Aorta (tissue), 5 donors: ENCODE measurements at regions of chr22 and their contacts with region 1.

Region 1: GRCh38 chr22:28600546-28601143 is 79.0 kb downstream of the TTC28 start:
- DNase-seq: no peak
- ATAC-seq: peak; percentile 52
- H3K4me3 ChIP-seq: no peak overlapping the region
- H3K27ac ChIP-seq: no peak overlapping the region
- H3K4me1 ChIP-seq: no peaks in the 10 kb centered on the region
- H3K27me3 ChIP-seq: no peaks in the 10 kb centered on the region

Region 2: DNA sequence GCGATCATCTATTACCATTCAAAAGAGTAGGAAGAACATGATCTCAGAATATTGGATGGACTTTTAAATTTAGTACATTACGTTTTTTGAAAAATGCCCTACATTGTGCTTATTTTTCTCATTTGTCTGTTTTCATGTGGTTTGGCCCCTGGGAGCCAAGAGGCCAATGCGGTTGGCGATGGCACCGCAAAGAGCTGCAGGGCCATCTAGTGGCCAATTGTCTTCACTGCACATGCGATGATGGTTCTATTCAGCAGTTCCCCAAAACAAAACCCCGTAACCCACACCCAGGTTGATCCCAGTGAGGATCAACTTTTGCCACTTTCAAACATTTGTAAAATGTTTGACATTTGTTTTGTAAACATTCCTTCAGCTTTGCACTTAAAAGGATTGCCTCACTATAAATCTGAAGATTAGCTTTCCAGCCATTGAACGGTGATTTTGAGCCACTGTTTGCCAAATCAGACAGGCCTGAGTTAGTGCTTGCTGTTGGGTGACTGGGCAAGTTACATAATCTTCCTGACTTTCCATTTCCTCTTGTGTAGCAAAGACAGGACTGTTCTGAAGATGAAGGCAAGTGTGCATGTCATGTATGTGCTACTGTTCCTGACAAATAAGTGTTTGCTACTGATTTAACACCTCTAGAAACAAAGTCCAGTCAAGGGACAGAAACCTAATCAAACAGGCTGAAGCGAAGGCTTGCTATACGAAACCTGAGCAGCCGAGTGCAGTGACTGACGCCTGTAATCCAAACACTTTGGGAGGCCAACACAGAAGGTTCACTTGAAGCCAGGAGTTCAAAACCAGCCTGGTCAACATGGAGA is 228.9 kb after region 1 on chr22:
- intact Hi-C with region 1: loop called (anchors 1 to 2 kb)
- DNase-seq: peak; percentile 86 to 88
- ATAC-seq: peak; percentile 93
- H3K4me3 ChIP-seq: no peak overlapping the region
- H3K27ac ChIP-seq: no peak overlapping the region
- H3K4me1 ChIP-seq: no peaks in the 10 kb centered on the region
- H3K27me3 ChIP-seq: no peaks in the 10 kb centered on the region

Region 3: DNA sequence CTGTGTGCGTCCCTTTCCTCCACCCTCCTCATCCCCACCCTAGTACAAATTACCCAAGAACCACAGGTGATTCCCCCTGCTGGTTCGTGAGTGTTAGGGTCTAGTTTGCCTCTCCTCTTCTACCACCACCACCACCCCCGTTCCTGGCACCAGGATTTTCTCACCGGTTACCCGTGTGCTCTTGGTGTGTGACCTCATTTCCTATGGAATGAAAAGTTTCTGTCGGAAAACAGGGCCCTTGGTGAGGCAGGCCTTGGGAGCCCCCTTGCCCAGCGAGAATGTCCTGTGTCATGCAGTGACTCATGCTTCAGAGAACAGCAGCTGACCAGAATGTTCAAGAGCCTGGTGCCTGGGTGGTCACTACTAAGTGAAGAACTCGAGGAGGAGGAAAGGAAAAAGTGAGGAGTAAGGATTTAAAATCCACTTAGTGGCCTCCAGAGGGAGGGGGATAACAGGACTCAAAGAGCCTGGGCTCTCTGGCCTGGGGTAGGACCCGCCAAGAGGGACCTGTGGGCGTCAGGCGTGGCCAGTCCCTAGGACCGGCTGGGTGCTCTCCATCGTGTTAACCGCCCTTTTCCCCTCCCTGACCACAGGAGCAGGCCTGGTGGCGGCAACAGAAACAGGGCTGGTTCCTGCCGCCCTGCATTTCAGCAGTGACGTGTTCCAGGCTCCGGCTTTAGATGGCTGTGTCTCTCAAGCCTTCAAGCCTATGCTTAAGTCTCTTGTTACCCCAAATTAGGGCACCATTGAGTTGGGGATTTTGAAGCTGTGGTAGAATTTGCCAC is 430.8 kb after region 1 on chr22:
- intact Hi-C with region 1: loop called in 1 of 2 experiments (anchors 10 kb)
- DNase-seq: peak; percentile 83 to 86
- ATAC-seq: peak; percentile 92
- H3K4me3 ChIP-seq: no peak overlapping the region
- H3K27ac ChIP-seq: peak overlapping the region; percentile 89 to 93
- H3K4me1 ChIP-seq: peaks cover 0 to 4% of the 10 kb centered on the region in 2 donors
- H3K27me3 ChIP-seq: no peaks in the 10 kb centered on the region

Region 4: GRCh38 chr22:29040385-29041275 is 440.0 kb after region 1 on chr22:
- intact Hi-C with region 1: loop called (anchors 10 kb)
- DNase-seq: peak in 1 of 2 donors; percentile 64
- ATAC-seq: peak; percentile 90
- H3K4me3 ChIP-seq: no peak overlapping the region
- H3K27ac ChIP-seq: no peak overlapping the region
- H3K4me1 ChIP-seq: peaks cover 0 to 4% of the 10 kb centered on the region in 2 donors
- H3K27me3 ChIP-seq: no peaks in the 10 kb centered on the region

Region 5: DNA sequence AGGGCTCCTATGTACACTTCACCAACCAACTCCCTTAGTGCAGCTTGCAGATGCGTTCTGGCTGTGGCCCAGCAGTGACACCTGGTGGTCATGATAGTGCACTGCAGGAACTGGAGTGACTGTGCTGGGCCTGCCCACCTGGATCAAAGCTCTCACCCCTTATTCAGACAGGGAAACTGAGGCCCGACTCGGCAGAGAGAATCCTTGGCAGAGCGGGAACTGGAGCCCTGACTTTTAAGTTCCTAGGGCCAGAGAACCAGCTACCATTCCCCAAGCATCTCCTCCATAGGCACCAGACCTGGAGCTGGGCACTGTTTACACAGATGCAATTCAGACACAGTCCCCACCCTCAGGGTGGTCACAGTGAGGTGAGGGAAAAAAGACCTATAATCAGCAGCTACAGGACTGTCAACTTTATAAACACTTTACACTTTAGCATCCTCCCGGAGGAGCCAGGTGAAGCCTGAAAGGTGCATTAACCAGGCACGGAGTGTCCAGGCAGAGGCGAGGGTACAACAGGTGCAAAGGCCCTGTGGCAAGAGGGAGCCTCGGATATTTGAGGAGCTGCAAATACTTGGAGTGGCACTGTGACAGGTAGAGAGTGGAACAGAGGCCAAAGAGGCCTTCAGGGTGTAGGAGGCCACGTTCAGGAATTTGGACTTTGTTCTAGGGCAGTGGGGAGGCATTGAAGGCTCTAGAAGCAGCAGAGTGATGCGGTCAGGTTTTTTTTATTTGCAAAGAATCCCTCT is 645.2 kb after region 1 on chr22:
- intact Hi-C with region 1: loop called in 1 of 2 experiments (anchors 10 kb)
- DNase-seq: peak; percentile 76 to 88
- ATAC-seq: peak; percentile 92
- H3K4me3 ChIP-seq: no peak overlapping the region
- H3K27ac ChIP-seq: no peak overlapping the region
- H3K4me1 ChIP-seq: no peaks in the 10 kb centered on the region
- H3K27me3 ChIP-seq: no peaks in the 10 kb centered on the region